Caco-2 (cell line): ENCODE measurements at regions of chr14 and their contacts with region 1.

Region 1: GRCh38 chr14:36207500-36207899 is 31.0 kb upstream of the PTCSC3 start:
- DNase-seq: peak in 1 of 2 experiments; percentile 12
- H3K4me3 ChIP-seq: no peak overlapping the region
- H3K4me3 Mint-ChIP-seq: no peak overlapping the region
- H3K27ac Mint-ChIP-seq: no peak overlapping the region
- H3K4me1 ChIP-seq: peaks cover 30% of the 10 kb centered on the region
- H3K4me1 Mint-ChIP-seq: peaks cover 28% of the 10 kb centered on the region
- H3K27me3 ChIP-seq: no peaks in the 10 kb centered on the region
- H3K27me3 Mint-ChIP-seq: peaks cover 5% of the 10 kb centered on the region
- CTCF ChIP-seq: peak; percentile 38 to 43

Region 2: GRCh38 chr14:36241183-36241582 is 33.7 kb after region 1 on chr14:
- CTCF ChIA-PET with region 1: no interaction called
- POLR2A ChIA-PET with region 1: no interaction called
- intact Hi-C with region 1: loop called (anchors 1 kb)
- DNase-seq: no peak
- H3K4me3 ChIP-seq: no peak overlapping the region
- H3K4me3 Mint-ChIP-seq: no peak overlapping the region
- H3K27ac Mint-ChIP-seq: no peak overlapping the region
- H3K4me1 ChIP-seq: peaks cover 13% of the 10 kb centered on the region
- H3K4me1 Mint-ChIP-seq: peaks cover 20% of the 10 kb centered on the region
- H3K27me3 ChIP-seq: no peaks in the 10 kb centered on the region
- H3K27me3 Mint-ChIP-seq: no peaks in the 10 kb centered on the region
- CTCF ChIP-seq: peak in 1 of 2 experiments; percentile 27

Region 3: GRCh38 chr14:36320200-36320896 is 112.8 kb after region 1 on chr14 and contains the start of gene MBIP:
- CTCF ChIA-PET with region 1: no interaction called
- POLR2A ChIA-PET with region 1: no interaction called
- intact Hi-C with region 1: loop called (anchors 2 kb)
- DNase-seq: peak; percentile 91 to 95
- H3K4me3 ChIP-seq: peak within 1 kb of the TSS; percentile 79
- H3K4me3 Mint-ChIP-seq: peak within 1 kb of the TSS; percentile 89
- H3K27ac Mint-ChIP-seq: peak within 1 kb of the TSS; percentile 87
- H3K4me1 ChIP-seq: no peaks in the 10 kb centered on the region
- H3K4me1 Mint-ChIP-seq: no peaks in the 10 kb centered on the region
- H3K27me3 ChIP-seq: no peaks in the 10 kb centered on the region
- H3K27me3 Mint-ChIP-seq: peaks cover 3% of the 10 kb centered on the region
- CTCF ChIP-seq: no peak
- total RNA-seq, gene MBIP: 27.8 and 28.8 TPM in 2 replicates

Region 4: GRCh38 chr14:36520601-36521525 is 313.4 kb after region 1 on chr14:
- CTCF ChIA-PET with region 1: no interaction called
- POLR2A ChIA-PET with region 1: no interaction called
- intact Hi-C with region 1: loop called (anchors 10 kb)
- DNase-seq: peak; percentile 73 to 81
- H3K4me3 ChIP-seq: peak overlapping the region; percentile 41
- H3K4me3 Mint-ChIP-seq: peak overlapping the region; percentile 76
- H3K27ac Mint-ChIP-seq: no peak overlapping the region
- H3K4me1 ChIP-seq: peaks cover 3% of the 10 kb centered on the region; the same call in 1 of the 2 replicates
- H3K4me1 Mint-ChIP-seq: no peaks in the 10 kb centered on the region
- H3K27me3 ChIP-seq: no peaks in the 10 kb centered on the region; the same call in 1 of the 2 replicates
- H3K27me3 Mint-ChIP-seq: peaks cover 5% of the 10 kb centered on the region
- CTCF ChIP-seq: peak in 1 of 2 experiments; percentile 77